PC-3 (cell line): ENCODE measurements at regions of chr10 and their contacts with region 1.

Region 1: GRCh38 chr10:63166742-63167258 is 33.7 kb downstream of the NRBF2 start:
- DNase-seq: peak; percentile 99
- ATAC-seq: peak; percentile 70
- H3K4me3 ChIP-seq: no peak overlapping the region
- H3K27ac ChIP-seq: no peak overlapping the region
- H3K4me1 ChIP-seq: no peaks in the 10 kb centered on the region
- H3K27me3 ChIP-seq: no peaks in the 10 kb centered on the region
- CTCF ChIP-seq: peak; percentile 100

Region 2: DNA sequence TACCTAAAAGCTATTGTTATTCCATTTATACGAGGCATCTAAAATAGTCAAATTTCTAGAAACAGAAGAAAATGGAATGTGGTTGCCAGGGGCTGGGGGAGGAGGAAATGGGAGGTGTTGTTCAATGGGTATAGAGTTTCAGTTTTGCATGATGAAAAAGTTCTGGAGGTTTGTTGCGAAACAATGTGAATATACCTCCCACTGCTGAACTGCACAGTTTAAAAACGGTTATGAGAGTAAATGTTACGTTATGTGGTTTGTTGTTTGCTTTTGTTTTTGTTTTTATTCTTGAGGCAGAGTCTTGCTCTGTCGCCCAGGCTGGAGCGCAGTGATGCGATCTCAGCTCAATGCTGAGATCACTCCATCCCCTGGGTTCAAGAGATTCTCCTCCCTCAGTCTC is 98.6 kb before region 1 on chr10:
- CTCF ChIA-PET with region 1: no interaction called
- POLR2A ChIA-PET with region 1: no interaction called
- intact Hi-C with region 1: no loop called
- DNase-seq: peak; percentile 77
- ATAC-seq: no peak
- H3K4me3 ChIP-seq: no peak overlapping the region
- H3K27ac ChIP-seq: no peak overlapping the region
- H3K4me1 ChIP-seq: peaks cover 40% of the 10 kb centered on the region
- H3K27me3 ChIP-seq: no peaks in the 10 kb centered on the region
- CTCF ChIP-seq: no peak

Region 3: GRCh38 chr10:63286754-63287264 is 120.0 kb after region 1 on chr10:
- CTCF ChIA-PET with region 1: interaction called, 12 read pairs
- POLR2A ChIA-PET with region 1: no interaction called
- intact Hi-C with region 1: no loop called
- DNase-seq: peak; percentile 99
- ATAC-seq: peak; percentile 54
- H3K4me3 ChIP-seq: no peak overlapping the region
- H3K27ac ChIP-seq: no peak overlapping the region
- H3K4me1 ChIP-seq: peaks cover 6% of the 10 kb centered on the region
- H3K27me3 ChIP-seq: no peaks in the 10 kb centered on the region
- CTCF ChIP-seq: no peak

Region 4: GRCh38 chr10:63588436-63589167 is 421.8 kb after region 1 on chr10:
- CTCF ChIA-PET with region 1: interaction called, 3 read pairs
- POLR2A ChIA-PET with region 1: interaction called, 11 read pairs
- intact Hi-C with region 1: loop called (anchors 5 kb)
- DNase-seq: peak; percentile 93
- ATAC-seq: peak; percentile 79
- H3K4me3 ChIP-seq: peak overlapping the region; percentile 2; the same call in 1 of the 2 replicates
- H3K27ac ChIP-seq: peak overlapping the region; percentile 44
- H3K4me1 ChIP-seq: peaks cover 31% of the 10 kb centered on the region
- H3K27me3 ChIP-seq: no peaks in the 10 kb centered on the region
- CTCF ChIP-seq: no peak

Region 5: DNA sequence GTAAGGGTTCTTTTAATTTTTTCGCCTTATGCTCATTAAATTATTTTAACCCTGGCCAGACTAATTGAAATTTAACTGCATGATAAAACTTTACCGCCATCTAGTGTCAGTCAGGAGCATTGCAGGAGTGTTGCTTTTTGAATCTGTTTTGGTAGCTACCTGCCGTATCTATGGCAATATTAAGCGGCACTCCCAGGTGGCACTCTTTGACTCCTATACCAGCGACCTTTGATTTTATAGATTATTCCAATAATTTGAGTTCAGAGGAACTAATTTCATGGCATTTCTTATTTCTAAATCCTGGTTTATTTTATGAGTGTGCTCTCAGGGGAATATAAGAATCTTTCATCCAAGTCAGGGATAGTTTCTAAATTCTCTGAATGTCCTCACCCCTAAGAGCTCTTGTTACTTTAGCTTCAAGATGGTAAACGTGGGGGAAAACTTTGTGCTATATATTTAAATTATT is 553.3 kb after region 1 on chr10:
- CTCF ChIA-PET with region 1: interaction called, 24 read pairs
- POLR2A ChIA-PET with region 1: no interaction called
- intact Hi-C with region 1: loop called (anchors 1 kb)
- DNase-seq: peak; percentile 97
- ATAC-seq: peak; percentile 53
- H3K4me3 ChIP-seq: no peak overlapping the region
- H3K27ac ChIP-seq: no peak overlapping the region
- H3K4me1 ChIP-seq: peaks cover 29% of the 10 kb centered on the region
- H3K27me3 ChIP-seq: no peaks in the 10 kb centered on the region
- CTCF ChIP-seq: peak; percentile 100

Region 6: GRCh38 chr10:63767138-63767801 is 600.5 kb after region 1 on chr10:
- CTCF ChIA-PET with region 1: interaction called, 3 read pairs
- POLR2A ChIA-PET with region 1: no interaction called
- intact Hi-C with region 1: loop called (anchors 1 kb)
- DNase-seq: peak; percentile 71
- ATAC-seq: peak; percentile 44
- H3K4me3 ChIP-seq: no peak overlapping the region
- H3K27ac ChIP-seq: no peak overlapping the region
- H3K4me1 ChIP-seq: no peaks in the 10 kb centered on the region
- H3K27me3 ChIP-seq: no peaks in the 10 kb centered on the region
- CTCF ChIP-seq: peak; percentile 83